SK-N-SH (cell line): ENCODE measurements at regions of chr7 and their contacts with region 1.

Region 1: GRCh38 chr7:142632291-142633134 is 116.8 kb upstream of the PRSS1 start:
- DNase-seq: peak; percentile 87
- H3K4me3 ChIP-seq: no peak overlapping the region
- H3K27ac ChIP-seq: peak overlapping the region in 1 of 2 experiments; percentile 11; a peak in 1 of 4 replicates
- H3K4me1 ChIP-seq: no peaks in the 10 kb centered on the region; a peak in 2 of 4 replicates
- H3K27me3 ChIP-seq: peaks cover 14% of the 10 kb centered on the region; the same call in 1 of the 2 replicates
- CTCF ChIP-seq: peak; percentile 93
- EP300 ChIP-seq: no peak
- RAD21 ChIP-seq: peak; percentile 96

Region 2: GRCh38 chr7:142357953-142358520 is 274.5 kb before region 1 on chr7:
- CTCF ChIA-PET with region 1: no interaction called
- POLR2A ChIA-PET with region 1: no interaction called
- DNase-seq: peak; percentile 66
- H3K4me3 ChIP-seq: no peak overlapping the region
- H3K27ac ChIP-seq: no peak overlapping the region
- H3K4me1 ChIP-seq: no peaks in the 10 kb centered on the region; a peak in 1 of 4 replicates
- H3K27me3 ChIP-seq: peaks cover 17% of the 10 kb centered on the region; the same call in 1 of the 2 replicates
- CTCF ChIP-seq: peak; percentile 93
- EP300 ChIP-seq: no peak
- RAD21 ChIP-seq: peak; percentile 64

Region 3: GRCh38 chr7:142496545-142497041 is 135.9 kb before region 1 on chr7:
- CTCF ChIA-PET with region 1: interaction called, 14 read pairs
- POLR2A ChIA-PET with region 1: no interaction called
- DNase-seq: peak; percentile 67
- H3K4me3 ChIP-seq: no peak overlapping the region
- H3K27ac ChIP-seq: no peak overlapping the region
- H3K4me1 ChIP-seq: peaks cover 0 to 3% of the 10 kb centered on the region in 2 experiments; a peak in 1 of 4 replicates
- H3K27me3 ChIP-seq: peaks cover 21% of the 10 kb centered on the region; the same call in 1 of the 2 replicates
- CTCF ChIP-seq: peak; percentile 95
- EP300 ChIP-seq: no peak
- RAD21 ChIP-seq: peak; percentile 69

Region 4: DNA sequence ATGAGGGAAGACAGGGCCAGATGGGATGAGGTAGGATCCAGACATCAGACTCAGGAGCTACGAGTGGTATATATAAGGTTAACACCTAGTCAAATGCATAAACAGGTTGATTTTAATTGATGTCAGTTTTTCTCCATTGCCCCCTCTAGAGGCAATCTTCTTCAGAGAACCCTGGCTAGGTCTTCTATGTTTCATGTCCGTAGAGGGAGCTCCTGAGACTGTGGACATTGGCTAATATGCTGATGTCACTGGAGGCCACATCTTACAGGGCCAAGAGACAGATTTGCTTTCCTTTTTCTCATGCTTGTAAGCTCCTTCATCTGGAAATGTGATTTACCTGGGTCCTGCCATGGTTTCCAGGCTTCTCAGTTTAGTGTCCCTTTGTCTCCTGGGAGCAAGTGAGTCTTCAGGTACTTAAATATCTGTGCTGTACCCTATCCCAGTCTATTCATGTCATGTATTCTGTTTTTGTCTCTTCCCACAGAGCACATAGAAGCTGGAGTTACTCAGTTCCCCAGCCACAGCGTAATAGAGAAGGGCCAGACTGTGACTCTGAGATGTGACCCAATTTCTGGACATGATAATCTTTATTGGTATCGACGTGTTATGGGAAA is 44.8 kb before region 1 on chr7:
- CTCF ChIA-PET with region 1: interaction called, 10 read pairs
- POLR2A ChIA-PET with region 1: no interaction called
- DNase-seq: peak; percentile 31
- H3K4me3 ChIP-seq: no peak overlapping the region; a peak in 1 of 4 replicates
- H3K27ac ChIP-seq: no peak overlapping the region
- H3K4me1 ChIP-seq: peaks cover 0 to 6% of the 10 kb centered on the region in 2 experiments; a peak in 3 of 4 replicates
- H3K27me3 ChIP-seq: no peaks in the 10 kb centered on the region
- CTCF ChIP-seq: peak; percentile 64
- EP300 ChIP-seq: no peak
- RAD21 ChIP-seq: peak; percentile 40; the same call in 1 of the 2 replicates

Region 5: GRCh38 chr7:142612237-142612881 is 20.2 kb before region 1 on chr7:
- CTCF ChIA-PET with region 1: interaction called, 69 read pairs
- POLR2A ChIA-PET with region 1: no interaction called
- DNase-seq: peak; percentile 63
- H3K4me3 ChIP-seq: no peak overlapping the region
- H3K27ac ChIP-seq: peak overlapping the region in 1 of 2 experiments; percentile 98; a peak in 3 of 4 replicates
- H3K4me1 ChIP-seq: peaks cover 0 to 17% of the 10 kb centered on the region in 2 experiments; a peak in 2 of 4 replicates
- H3K27me3 ChIP-seq: no peaks in the 10 kb centered on the region; the same call in 1 of the 2 replicates
- CTCF ChIP-seq: no peak
- EP300 ChIP-seq: peak; percentile 23 to 68; a peak in 2 of 4 replicates
- RAD21 ChIP-seq: no peak

Region 6: GRCh38 chr7:142711746-142712619 is 79.5 kb after region 1 on chr7:
- CTCF ChIA-PET with region 1: interaction called, 41 read pairs
- POLR2A ChIA-PET with region 1: no interaction called
- DNase-seq: peak; percentile 36
- H3K4me3 ChIP-seq: no peak overlapping the region
- H3K27ac ChIP-seq: no peak overlapping the region
- H3K4me1 ChIP-seq: no peaks in the 10 kb centered on the region; a peak in 1 of 4 replicates
- H3K27me3 ChIP-seq: peaks cover 6% of the 10 kb centered on the region; the same call in 1 of the 2 replicates
- CTCF ChIP-seq: peak; percentile 90
- EP300 ChIP-seq: no peak
- RAD21 ChIP-seq: peak; percentile 59

Region 7: GRCh38 chr7:142759433-142759832 is 126.9 kb after region 1 on chr7:
- CTCF ChIA-PET with region 1: no interaction called
- POLR2A ChIA-PET with region 1: no interaction called
- DNase-seq: no peak
- H3K4me3 ChIP-seq: no peak overlapping the region
- H3K27ac ChIP-seq: no peak overlapping the region
- H3K4me1 ChIP-seq: no peaks in the 10 kb centered on the region
- H3K27me3 ChIP-seq: peaks cover 58% of the 10 kb centered on the region
- CTCF ChIP-seq: no peak
- EP300 ChIP-seq: no peak
- RAD21 ChIP-seq: no peak

Region 8: DNA sequence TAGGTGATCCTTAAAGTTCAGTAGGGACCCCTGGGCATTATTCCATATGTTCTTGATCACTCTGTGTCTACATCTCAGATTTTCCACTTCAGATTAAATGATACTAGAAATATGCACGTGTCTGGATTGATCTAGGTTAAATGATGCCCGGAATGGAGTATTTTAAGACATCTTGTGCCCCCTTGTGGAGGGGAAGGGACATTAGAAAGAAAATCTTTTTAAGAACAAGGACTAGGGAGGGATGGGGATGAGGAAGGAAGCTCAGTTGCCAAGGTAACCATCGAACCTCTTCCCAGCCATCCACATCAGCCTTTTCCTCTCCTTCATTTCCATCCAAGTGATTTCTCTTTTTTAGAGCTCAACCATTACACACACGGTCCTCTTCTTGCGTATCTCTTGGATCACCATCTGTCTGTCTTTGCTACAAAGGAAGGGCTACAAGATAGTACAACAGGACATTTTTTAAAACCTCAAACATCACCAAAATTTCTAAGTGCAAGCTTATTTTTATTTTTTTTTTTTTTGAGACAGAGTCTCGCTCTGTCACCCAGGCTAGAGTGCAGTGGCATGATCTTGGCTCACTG is 178.7 kb after region 1 on chr7:
- CTCF ChIA-PET with region 1: interaction called, 127 read pairs
- POLR2A ChIA-PET with region 1: no interaction called
- DNase-seq: peak; percentile 59
- H3K4me3 ChIP-seq: no peak overlapping the region; a peak in 1 of 4 replicates
- H3K27ac ChIP-seq: no peak overlapping the region
- H3K4me1 ChIP-seq: peaks cover 27 to 33% of the 10 kb centered on the region in 2 experiments
- H3K27me3 ChIP-seq: peaks cover 10% of the 10 kb centered on the region; the same call in 1 of the 2 replicates
- CTCF ChIP-seq: peak; percentile 89
- EP300 ChIP-seq: no peak
- RAD21 ChIP-seq: peak; percentile 76

Region 9: DNA sequence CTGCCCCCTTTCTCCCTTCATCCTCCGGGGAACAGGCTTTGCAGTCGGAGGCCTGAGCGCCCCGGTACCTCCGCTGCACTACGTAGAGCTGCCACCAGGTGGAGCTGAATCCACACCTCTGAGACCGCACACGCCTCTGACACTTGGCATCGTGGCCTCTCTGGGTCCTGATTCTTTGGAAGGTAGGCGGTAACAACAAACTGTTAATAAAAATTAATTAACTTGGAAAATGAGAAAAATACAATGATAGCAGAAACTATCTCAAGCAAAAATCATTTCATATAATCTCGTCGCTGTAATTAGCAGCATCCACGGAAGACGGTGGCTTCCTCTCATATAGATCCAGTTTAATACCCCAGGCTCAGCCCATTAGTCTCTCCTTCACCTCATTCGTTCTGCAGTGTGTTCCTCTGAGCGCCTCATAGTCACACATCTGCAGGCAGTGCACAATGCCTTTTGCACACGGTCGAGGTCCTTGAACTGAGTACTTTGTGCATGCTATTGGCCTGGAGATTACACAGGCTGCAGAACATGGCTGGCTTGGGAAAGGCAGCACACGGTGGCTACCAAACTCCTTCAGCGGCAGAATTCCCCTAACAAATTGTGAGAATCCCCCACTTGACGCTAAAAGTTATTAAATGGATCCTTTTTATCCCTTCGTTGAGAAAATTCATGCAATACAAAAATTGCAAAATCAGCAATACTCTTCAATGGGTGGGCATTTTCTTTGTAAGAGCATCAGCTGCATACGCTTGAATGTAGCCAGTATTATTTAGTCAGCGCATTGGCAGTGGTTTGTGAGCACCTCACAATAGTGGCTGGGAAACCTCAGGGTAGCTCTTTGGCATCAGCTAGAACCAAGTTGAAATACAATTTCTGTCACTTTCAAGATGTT is 375.7 kb after region 1 on chr7:
- CTCF ChIA-PET with region 1: interaction called, 10 read pairs
- POLR2A ChIA-PET with region 1: no interaction called
- DNase-seq: peak; percentile 78
- H3K4me3 ChIP-seq: no peak overlapping the region; a peak in 1 of 4 replicates
- H3K27ac ChIP-seq: no peak overlapping the region
- H3K4me1 ChIP-seq: 0 out of 4 replicates have a peak, but pooled peaks cover 0 to under 1% of the 10 kb centered on the region in 2 experiments
- H3K27me3 ChIP-seq: no peaks in the 10 kb centered on the region; the same call in 1 of the 2 replicates
- CTCF ChIP-seq: peak; percentile 100
- EP300 ChIP-seq: no peak
- RAD21 ChIP-seq: peak; percentile 96